ENCODE measurements at regions of chr11 and their contacts with region 1.

Region 1: GRCh38 chr11:33329705-33330329 is 72.6 kb downstream of the HIPK3 start:
- DNase-seq: no peak
- H3K4me3 ChIP-seq: no peak overlapping the region
- H3K27ac ChIP-seq: no peak overlapping the region
- H3K4me1 ChIP-seq: no peaks in the 10 kb centered on the region
- H3K27me3 ChIP-seq: no peaks in the 10 kb centered on the region
- CTCF ChIP-seq: peak in 2 of 3 donors; percentile 43 to 55
- POLR2A ChIP-seq: no peak

Region 2: DNA sequence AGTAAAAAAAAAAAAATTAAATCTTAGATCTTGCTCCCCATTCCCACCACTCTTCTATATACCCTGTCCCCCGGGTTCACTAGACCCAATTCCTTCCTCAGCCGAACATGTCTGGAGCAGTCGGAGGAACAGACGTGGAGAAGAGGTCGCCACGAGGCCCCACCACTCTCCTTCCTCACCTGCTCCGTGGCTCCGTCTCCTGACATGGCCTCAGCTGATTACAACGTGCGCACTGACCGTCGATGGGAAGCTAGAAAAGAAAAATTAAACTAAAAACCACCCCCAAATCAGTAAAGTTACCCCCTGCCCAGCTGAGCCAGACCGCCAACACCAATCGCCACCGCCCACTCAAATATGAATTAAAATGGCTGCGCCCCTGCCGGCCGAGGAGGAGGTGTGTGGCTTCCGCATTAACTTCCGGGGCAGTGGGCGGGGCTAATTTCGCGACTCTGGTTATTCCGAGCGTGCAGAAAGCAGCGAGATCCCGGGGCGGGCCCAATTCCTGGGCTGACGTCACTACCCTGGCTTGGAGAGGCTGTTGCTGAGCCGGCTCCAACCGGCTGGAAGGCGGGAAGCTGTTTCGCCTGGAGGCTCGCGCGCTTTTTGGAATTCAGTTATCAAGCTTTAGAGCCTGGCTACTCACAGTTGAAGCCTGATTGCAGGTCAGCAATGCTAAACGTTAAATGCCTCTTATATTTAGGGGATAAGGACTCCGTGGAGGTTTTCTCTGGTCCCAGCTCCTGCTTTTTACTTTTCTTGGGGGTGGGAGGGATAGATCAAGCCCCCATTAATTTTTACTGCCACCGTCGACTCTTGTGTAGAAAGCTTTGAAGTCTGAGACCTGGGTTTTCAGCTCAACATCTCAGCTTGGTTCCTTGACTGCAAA is 168.5 kb before region 1 on chr11 and contains the start of gene CSTF3:
- intact Hi-C with region 1: loop called (anchors 10 kb)
- DNase-seq: peak; percentile 99 to 100
- H3K4me3 ChIP-seq: peak within 1 kb of the TSS; percentile 76 to 81 (median 78)
- H3K27ac ChIP-seq: peak within 1 kb of the TSS; percentile 72 to 88
- H3K4me1 ChIP-seq: no peaks in the 10 kb centered on the region
- H3K27me3 ChIP-seq: no peaks in the 10 kb centered on the region
- CTCF ChIP-seq: peak; percentile 42 to 96 (median 84)
- POLR2A ChIP-seq: peak; percentile 62
- total RNA-seq, gene CSTF3: 9.0 to 33.4 (median 15.7) TPM